Activated CD4-positive, alpha-beta memory T cell treated with anti-CD3 and anti-CD28 coated beads, Interleukin-2, amount 10 ng/mL, durations not matched to agents 7 days and 5 days (primary cell): ENCODE measurements at regions of chr10 and their contacts with region 1.

Region 1: GRCh38 chr10:17504547-17505245 is 50.3 kb upstream of the ST8SIA6 start:
- DNase-seq: no peak
- H3K4me3 Mint-ChIP-seq: peak overlapping the region; percentile 57
- H3K27ac Mint-ChIP-seq: peak overlapping the region; percentile 91
- H3K4me1 Mint-ChIP-seq: peaks cover 58% of the 10 kb centered on the region
- H3K27me3 Mint-ChIP-seq: no peaks in the 10 kb centered on the region

Region 2: DNA sequence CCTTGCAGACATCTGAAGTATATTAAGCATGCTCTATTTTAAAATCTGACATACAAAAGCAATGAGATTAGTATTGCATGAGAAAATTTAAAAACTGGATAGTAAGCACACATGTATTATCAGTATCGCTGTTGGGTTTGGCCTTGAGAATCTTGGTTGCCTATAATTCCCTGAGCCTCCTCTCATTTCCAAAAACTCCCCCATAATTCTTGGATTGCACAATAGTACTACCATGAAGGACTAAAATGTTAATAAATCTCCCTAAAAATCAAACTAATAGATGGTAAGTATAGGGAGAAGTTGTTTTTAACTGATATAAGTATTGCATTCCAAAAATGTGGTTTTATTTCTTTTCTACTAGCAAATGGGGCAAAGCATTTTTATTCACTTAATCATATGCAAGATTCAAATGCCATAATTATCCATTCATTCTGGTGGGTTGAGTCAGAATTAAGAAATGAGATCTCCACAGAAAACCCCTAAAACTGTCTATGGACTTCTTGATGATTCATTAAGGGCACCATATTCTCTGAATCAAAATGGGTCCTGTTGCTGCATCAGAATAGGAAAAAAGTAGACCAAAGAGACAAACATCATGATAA is 287.0 kb before region 1 on chr10:
- CTCF ChIA-PET with region 1: no interaction called
- POLR2A ChIA-PET with region 1: no interaction called
- DNase-seq: no peak
- H3K4me3 Mint-ChIP-seq: no peak overlapping the region
- H3K27ac Mint-ChIP-seq: peak overlapping the region; percentile 95
- H3K4me1 Mint-ChIP-seq: peaks cover 62% of the 10 kb centered on the region
- H3K27me3 Mint-ChIP-seq: no peaks in the 10 kb centered on the region

Region 3: GRCh38 chr10:17454161-17455014 is 50.3 kb before region 1 on chr10 and contains the start of gene ST8SIA6:
- CTCF ChIA-PET with region 1: interaction called, 8 read pairs
- POLR2A ChIA-PET with region 1: interaction called, 11 read pairs
- DNase-seq: peak; percentile 66
- H3K4me3 Mint-ChIP-seq: peak within 1 kb of the TSS; percentile 88
- H3K27ac Mint-ChIP-seq: peak within 1 kb of the TSS; percentile 69
- H3K4me1 Mint-ChIP-seq: peaks cover 21% of the 10 kb centered on the region
- H3K27me3 Mint-ChIP-seq: peaks cover 31% of the 10 kb centered on the region
- total RNA-seq, gene ST8SIA6: 0.93 to 0.95 TPM